ENCODE measurements at regions of chr9 and their contacts with region 1.

Region 1: GRCh38 chr9:103168254-103168653 is 173.1 kb downstream of the CYLC2 start:
- DNase-seq: no peak
- H3K4me3 ChIP-seq: no peak overlapping the region
- H3K27ac ChIP-seq: no peak overlapping the region
- H3K4me1 ChIP-seq: no peaks in the 10 kb centered on the region
- H3K27me3 ChIP-seq: no peaks in the 10 kb centered on the region
- CTCF ChIP-seq: no peak
- POLR2A ChIP-seq: no peak

Region 2: GRCh38 chr9:102922526-102922925 is 245.7 kb before region 1 on chr9:
- intact Hi-C with region 1: no loop called
- DNase-seq: no peak
- H3K4me3 ChIP-seq: no peak overlapping the region
- H3K27ac ChIP-seq: no peak overlapping the region
- H3K4me1 ChIP-seq: no peaks in the 10 kb centered on the region
- H3K27me3 ChIP-seq: no peaks in the 10 kb centered on the region
- CTCF ChIP-seq: no peak
- POLR2A ChIP-seq: no peak

Region 3: GRCh38 chr9:103225702-103226646 is 57.7 kb after region 1 on chr9:
- intact Hi-C with region 1: loop called (anchors 10 kb)
- DNase-seq: no peak
- H3K4me3 ChIP-seq: no peak overlapping the region
- H3K27ac ChIP-seq: no peak overlapping the region
- H3K4me1 ChIP-seq: no peaks in the 10 kb centered on the region
- H3K27me3 ChIP-seq: no peaks in the 10 kb centered on the region
- CTCF ChIP-seq: no peak
- POLR2A ChIP-seq: no peak